WTC11 (cell line): ENCODE measurements at regions of chr1 and their contacts with region 1.

Region 1: GRCh38 chr1:24897767-24898483 is 32.2 kb downstream of the RUNX3 start:
- DNase-seq: peak; percentile 79
- ATAC-seq: peak; percentile 93
- H3K4me3 Mint-ChIP-seq: no peak overlapping the region
- H3K27ac Mint-ChIP-seq: no peak overlapping the region
- H3K4me1 Mint-ChIP-seq: peaks cover 7% of the 10 kb centered on the region
- H3K27me3 Mint-ChIP-seq: peaks cover under 1% of the 10 kb centered on the region; the same call in 1 of the 2 replicates
- CTCF ChIP-seq: peak; percentile 71

Region 2: DNA sequence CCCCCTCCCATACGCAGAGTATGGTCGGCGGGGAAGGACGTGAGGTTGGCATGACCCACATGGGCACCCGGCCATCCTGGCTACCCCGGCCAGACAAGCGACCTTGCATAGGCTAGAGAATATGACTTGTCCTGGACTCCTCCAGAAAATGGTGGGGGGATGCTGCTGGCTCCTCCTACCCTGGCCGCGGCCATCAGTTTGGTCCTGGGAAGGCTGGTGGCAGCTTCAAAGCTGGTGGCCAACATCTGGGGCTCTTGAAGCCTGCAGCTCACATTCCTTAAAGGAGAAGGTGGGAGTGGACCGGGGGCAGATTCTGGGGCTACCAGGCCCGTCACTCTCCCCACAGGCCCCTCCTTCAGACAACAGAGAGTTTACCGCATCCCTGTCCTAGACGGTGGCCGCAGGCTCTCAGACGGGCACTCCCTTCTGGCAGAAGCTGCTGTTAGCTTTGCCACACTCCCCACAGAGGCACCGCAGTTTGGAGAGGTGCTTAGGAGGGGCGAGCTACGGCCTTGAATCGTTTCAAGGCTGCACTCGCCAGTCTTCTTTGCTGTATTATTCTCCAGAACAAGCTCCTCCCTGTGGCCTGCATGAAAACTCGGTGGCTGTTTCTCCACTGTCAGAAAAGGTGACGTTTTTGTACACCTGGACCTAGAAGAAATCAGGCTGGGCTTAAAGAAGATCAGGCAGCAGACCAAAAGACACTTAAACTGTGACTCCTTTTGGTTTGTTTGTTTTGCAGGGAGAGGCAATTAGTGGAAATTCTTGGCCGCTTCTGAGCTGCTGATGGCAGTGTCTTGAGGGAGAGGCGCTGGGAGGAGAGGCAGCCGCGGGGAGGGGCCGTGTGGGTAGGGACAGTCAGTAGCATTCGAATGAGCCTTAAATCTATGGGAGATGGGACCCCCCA is 35.9 kb before region 1 on chr1:
- CTCF ChIA-PET with region 1: interaction called, 14 read pairs
- POLR2A ChIA-PET with region 1: no interaction called
- DNase-seq: no peak
- ATAC-seq: peak; percentile 29
- H3K4me3 Mint-ChIP-seq: no peak overlapping the region
- H3K27ac Mint-ChIP-seq: peak overlapping the region; percentile 20; the same call in 1 of the 2 replicates
- H3K4me1 Mint-ChIP-seq: peaks cover 15% of the 10 kb centered on the region
- H3K27me3 Mint-ChIP-seq: no peaks in the 10 kb centered on the region
- CTCF ChIP-seq: no peak

Region 3: GRCh38 chr1:24874611-24875234 is 23.2 kb before region 1 on chr1:
- CTCF ChIA-PET with region 1: interaction called, 11 read pairs
- POLR2A ChIA-PET with region 1: no interaction called
- DNase-seq: no peak
- ATAC-seq: no peak
- H3K4me3 Mint-ChIP-seq: no peak overlapping the region
- H3K27ac Mint-ChIP-seq: no peak overlapping the region
- H3K4me1 Mint-ChIP-seq: peaks cover 14% of the 10 kb centered on the region
- H3K27me3 Mint-ChIP-seq: no peaks in the 10 kb centered on the region
- CTCF ChIP-seq: no peak

Region 4: DNA sequence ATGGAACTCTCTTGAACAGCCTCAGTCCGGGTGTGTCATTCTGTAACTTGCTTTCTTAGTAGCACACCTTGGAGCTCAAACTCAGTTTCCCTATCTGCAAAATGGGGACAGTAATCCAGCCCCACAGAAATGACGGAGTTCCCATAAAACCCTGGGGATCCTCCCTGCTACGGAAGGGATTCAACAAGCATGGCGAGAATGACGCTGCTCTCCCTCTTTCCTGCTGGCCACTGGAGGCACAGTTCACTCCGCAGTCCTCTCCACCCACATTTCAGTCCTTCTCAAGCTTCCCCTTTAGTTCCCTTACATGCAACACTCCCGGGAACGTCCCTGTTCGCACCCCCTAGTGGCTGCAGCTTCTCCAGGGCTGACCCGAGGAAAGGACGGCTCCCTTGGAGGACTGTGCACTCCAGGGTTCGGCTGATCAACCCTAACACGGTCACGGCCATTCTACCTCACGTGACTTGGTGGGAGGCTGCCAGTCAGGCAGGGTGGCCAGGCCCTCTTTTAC is 11.5 kb after region 1 on chr1:
- CTCF ChIA-PET with region 1: interaction called, 28 read pairs
- POLR2A ChIA-PET with region 1: interaction called, 6 read pairs
- DNase-seq: peak; percentile 89
- ATAC-seq: peak; percentile 94
- H3K4me3 Mint-ChIP-seq: peak overlapping the region; percentile 25; the same call in 1 of the 2 replicates
- H3K27ac Mint-ChIP-seq: peak overlapping the region; percentile 81
- H3K4me1 Mint-ChIP-seq: peaks cover 11% of the 10 kb centered on the region
- H3K27me3 Mint-ChIP-seq: no peaks in the 10 kb centered on the region
- CTCF ChIP-seq: 0 out of 2 replicates have a peak, but pooled peaks have one; percentile 18

Region 5: GRCh38 chr1:24914226-24915069 is 16.5 kb after region 1 on chr1:
- CTCF ChIA-PET with region 1: interaction called, 28 read pairs
- POLR2A ChIA-PET with region 1: no interaction called
- DNase-seq: no peak
- ATAC-seq: no peak
- H3K4me3 Mint-ChIP-seq: no peak overlapping the region
- H3K27ac Mint-ChIP-seq: peak overlapping the region; percentile 76; the same call in 1 of the 2 replicates
- H3K4me1 Mint-ChIP-seq: peaks cover 15% of the 10 kb centered on the region
- H3K27me3 Mint-ChIP-seq: no peaks in the 10 kb centered on the region
- CTCF ChIP-seq: no peak

Region 6: DNA sequence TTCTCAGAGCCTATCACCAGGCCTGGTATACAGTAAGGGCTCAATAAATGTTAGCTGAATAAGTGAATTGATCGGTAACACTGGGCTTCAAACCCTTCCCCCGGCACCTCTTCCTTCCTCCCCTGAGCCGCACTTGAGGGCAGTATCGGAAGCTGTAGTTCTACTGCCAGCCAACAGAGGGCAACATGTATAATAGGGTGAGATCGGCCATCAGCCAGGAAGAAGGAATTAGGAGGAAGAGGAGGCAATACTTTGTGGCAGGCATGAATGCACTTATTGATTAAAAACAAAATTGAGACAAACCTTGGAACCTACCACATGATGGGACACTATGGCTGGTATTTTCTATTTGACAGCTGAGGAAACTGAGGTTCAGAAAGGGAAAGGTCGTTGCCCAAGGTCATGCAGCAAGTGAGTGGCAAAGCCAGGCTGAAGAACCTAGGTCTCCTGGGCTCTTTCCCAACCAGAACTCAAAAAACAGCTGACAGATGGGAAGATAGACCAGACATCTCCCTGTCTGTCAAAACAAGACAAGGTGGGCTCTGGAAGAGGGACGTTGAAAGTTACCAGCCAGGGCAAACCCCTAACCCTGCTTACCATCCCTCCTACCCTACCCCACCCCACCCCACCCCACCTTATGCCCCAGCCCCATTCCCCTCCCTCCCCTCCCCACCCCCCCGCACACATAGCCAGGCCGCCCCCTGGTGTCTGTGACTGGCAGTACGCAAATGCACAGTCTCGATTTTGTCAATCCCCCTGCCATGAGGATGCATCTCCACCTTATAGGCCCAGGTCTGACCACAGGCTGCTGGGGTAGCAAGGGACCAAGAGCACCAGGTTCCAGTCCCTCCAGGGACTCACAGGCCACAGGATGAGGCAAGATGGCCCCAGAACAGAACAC is 139.5 kb after region 1 on chr1:
- CTCF ChIA-PET with region 1: no interaction called
- POLR2A ChIA-PET with region 1: no interaction called
- DNase-seq: peak; percentile 75
- ATAC-seq: peak; percentile 82
- H3K4me3 Mint-ChIP-seq: no peak overlapping the region
- H3K27ac Mint-ChIP-seq: no peak overlapping the region
- H3K4me1 Mint-ChIP-seq: no peaks in the 10 kb centered on the region
- H3K27me3 Mint-ChIP-seq: no peaks in the 10 kb centered on the region
- CTCF ChIP-seq: peak; percentile 66